Naive thymus-derived CD4-positive, alpha-beta T cell (primary cell): ENCODE measurements at regions of chr3 and their contacts with region 1.

Region 1: GRCh38 chr3:113947372-113948014 is at the start of gene ZDHHC23:
- DNase-seq: peak; percentile 55 to 82 (median 69)
- ATAC-seq: peak; percentile 92
- H3K4me3 ChIP-seq: peak within 1 kb of the TSS; percentile 62
- H3K4me3 Mint-ChIP-seq: peak within 1 kb of the TSS; percentile 79 to 94 (median 86)
- H3K27ac ChIP-seq: peak within 1 kb of the TSS; percentile 42
- H3K27ac Mint-ChIP-seq: peak within 1 kb of the TSS in 7 of 9 donors; percentile 33 to 81 (median 59)
- H3K4me1 ChIP-seq: peaks cover 0 to 8% of the 10 kb centered on the region in 2 donors
- H3K4me1 Mint-ChIP-seq: peaks cover 8 to 20% (median 13%) of the 10 kb centered on the region in 7 donors
- H3K27me3 ChIP-seq: no peaks in the 10 kb centered on the region
- H3K27me3 Mint-ChIP-seq: peaks cover 9 to 60% (median 14%) of the 10 kb centered on the region in 5 donors
- total RNA-seq, gene ZDHHC23: 2.1 to 3.4 (median 3.2) TPM

Region 2: DNA sequence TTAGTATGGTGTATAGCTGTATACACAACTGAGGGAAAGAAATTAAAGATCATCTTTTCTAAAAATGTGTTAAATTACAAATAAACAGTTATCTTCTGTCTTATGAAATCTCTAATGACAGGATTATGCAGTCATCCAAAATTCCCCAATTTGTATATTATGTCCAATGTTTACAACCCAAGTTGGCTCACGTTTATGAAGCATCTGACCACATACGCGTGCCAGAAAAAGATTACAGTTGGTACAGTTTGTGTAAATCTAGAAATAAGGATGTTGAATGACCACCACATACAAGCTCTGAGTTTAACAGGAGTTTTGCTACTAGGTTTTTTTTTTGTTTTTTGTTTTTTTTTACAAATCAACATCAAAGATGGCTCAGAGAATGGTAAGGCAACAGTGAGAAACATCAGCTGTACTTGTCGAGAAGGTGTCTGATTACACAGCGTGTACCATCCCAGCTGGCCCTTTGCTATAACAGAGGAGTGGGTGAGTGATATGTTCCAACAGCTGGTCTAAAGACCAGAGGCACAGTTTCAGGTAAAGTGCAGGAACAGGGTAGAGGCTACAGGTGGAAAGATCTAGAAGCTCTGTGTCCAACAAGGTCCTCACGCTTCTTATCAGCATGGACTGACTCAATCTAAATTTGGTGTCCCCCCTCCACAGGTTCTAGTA is 298.2 kb before region 1 on chr3:
- CTCF ChIA-PET with region 1: no interaction called
- POLR2A ChIA-PET with region 1: no interaction called
- intact Hi-C with region 1: no loop called
- DNase-seq: no peak
- ATAC-seq: no peak
- H3K4me3 ChIP-seq: no peak overlapping the region
- H3K4me3 Mint-ChIP-seq: no peak overlapping the region
- H3K27ac ChIP-seq: no peak overlapping the region
- H3K27ac Mint-ChIP-seq: no peak overlapping the region
- H3K4me1 ChIP-seq: no peaks in the 10 kb centered on the region
- H3K4me1 Mint-ChIP-seq: peaks cover 0 to 4% (median 0%) of the 10 kb centered on the region in 7 donors
- H3K27me3 ChIP-seq: no peaks in the 10 kb centered on the region
- H3K27me3 Mint-ChIP-seq: no peaks in the 10 kb centered on the region

Region 3: DNA sequence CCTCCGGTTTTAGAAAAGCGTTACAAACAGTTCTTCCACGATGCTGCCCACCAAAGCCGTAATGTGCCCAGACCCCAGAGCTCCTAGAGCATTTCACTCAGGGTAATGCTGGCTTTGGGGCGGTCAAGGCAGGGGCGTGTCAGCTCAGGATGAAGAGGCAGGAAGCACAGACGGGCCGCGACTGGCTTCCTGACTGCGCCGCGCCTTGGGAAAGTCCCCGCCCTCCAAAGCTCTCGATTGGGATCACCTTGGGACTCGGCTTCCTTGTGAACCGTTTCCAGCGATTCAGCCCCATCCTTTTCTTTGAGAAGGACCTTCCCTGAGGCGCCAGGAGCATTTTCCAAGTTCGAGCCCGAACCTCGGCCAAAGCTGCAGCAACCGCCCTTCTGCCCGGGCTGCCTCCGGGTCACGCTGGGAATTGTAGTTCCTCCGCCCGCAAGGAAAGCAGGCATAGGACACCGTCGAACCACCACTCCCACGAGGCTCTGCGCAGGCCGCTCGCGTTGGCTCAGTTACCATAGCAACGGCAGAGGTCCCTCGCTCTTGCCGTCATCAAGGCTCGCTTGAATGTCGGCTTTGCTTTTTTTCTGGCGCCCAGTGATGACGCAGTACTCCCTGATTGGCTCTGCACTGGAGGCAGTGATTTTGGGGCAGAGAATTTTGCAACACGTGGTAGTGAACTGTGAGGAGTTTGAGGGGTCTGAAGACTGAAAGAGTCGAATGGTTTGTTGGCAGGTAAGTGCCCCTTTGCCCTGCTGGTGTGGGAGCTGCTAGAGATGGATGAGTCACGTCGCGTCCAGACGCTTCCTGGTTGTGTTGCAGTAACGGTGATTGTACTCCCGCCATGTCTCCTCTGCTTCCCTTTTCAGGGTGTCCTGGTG is 108.9 kb after region 1 on chr3 and contains the starts of genes CCDC191 and QTRT2:
- CTCF ChIA-PET with region 1: no interaction called
- POLR2A ChIA-PET with region 1: no interaction called
- intact Hi-C with region 1: loop called (anchors 1 kb)
- DNase-seq: peak; percentile 82 to 99 (median 98)
- ATAC-seq: peak; percentile 97
- H3K4me3 ChIP-seq: peak within 1 kb of the TSS; percentile 95
- H3K4me3 Mint-ChIP-seq: peak within 1 kb of the TSS; percentile 91 to 100 (median 98)
- H3K27ac ChIP-seq: peak within 1 kb of the TSS; percentile 91
- H3K27ac Mint-ChIP-seq: peak within 1 kb of the TSS; percentile 87 to 99 (median 97)
- H3K4me1 ChIP-seq: peaks cover 10 to 12% of the 10 kb centered on the region in 2 donors
- H3K4me1 Mint-ChIP-seq: peaks cover 24 to 60% (median 55%) of the 10 kb centered on the region in 7 donors
- H3K27me3 ChIP-seq: no peaks in the 10 kb centered on the region
- H3K27me3 Mint-ChIP-seq: peaks cover 0 to 2% (median 0%) of the 10 kb centered on the region in 5 donors
- total RNA-seq, gene CCDC191: 3.9 to 8.8 (median 5.1) TPM
- total RNA-seq, gene QTRT2: 29.9 to 38.8 (median 33.8) TPM